T-cell (primary cell): ENCODE measurements at regions of chr20 and their contacts with region 1.

Region 1: GRCh38 chr20:63641792-63642544 is 11.3 kb downstream of the STMN3 start:
- DNase-seq: peak; percentile 91 to 99 (median 96)
- ATAC-seq: peak; percentile 54 to 72 (median 62)
- H3K4me3 ChIP-seq: peak overlapping the region in 1 of 2 donors; percentile 94
- H3K4me3 Mint-ChIP-seq: peak overlapping the region; percentile 74 to 80 (median 79)
- H3K27ac ChIP-seq: peak overlapping the region; percentile 82
- H3K27ac Mint-ChIP-seq: peak overlapping the region; percentile 55 to 68
- H3K4me1 ChIP-seq: peaks cover 21 to 43% of the 10 kb centered on the region in 2 experiments
- H3K4me1 Mint-ChIP-seq: peaks cover 29 to 42% (median 37%) of the 10 kb centered on the region in 3 donors
- H3K27me3 ChIP-seq: peaks cover 0 to 2% of the 10 kb centered on the region in 2 experiments
- H3K27me3 Mint-ChIP-seq: no peaks in the 10 kb centered on the region

Region 2: DNA sequence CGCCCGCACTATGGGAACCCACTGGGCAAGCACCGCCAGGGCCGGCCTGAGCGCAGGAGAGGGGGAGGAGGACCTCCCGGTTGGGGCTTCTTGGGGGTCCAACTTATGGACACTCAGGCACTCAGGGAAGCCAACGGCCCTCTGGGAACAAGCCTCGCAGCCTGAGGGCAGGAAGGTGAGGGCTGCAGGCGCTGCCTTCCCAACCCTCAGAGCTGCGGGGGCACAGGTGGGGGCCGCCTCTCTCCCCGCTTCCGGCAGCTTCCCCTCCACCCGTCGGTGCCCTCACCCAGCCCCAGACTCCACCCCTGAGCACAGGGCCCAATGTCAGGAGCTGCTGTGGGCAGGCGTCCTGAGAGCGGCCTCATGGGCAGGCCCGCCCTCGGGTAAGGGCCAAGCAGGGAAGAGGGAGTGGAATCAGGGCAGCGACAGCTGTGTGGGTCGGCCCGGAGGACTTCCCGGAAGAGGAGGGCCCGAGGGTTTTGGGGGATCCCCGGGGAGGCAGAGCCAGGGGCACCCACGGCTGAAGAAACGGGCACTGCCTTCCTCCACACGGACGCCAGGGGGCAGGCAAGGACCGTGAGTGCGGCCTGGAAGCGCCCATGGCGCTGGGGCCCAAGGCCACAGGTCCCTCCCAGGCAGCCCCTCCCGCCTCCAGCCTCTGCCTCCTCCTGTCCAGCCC is 104.3 kb before region 1 on chr20:
- CTCF ChIA-PET with region 1: interaction called in 1 of 2 experiments, 22 read pairs
- POLR2A ChIA-PET with region 1: no interaction called
- DNase-seq: peak; percentile 84 to 97 (median 90)
- ATAC-seq: peak; percentile 87 to 91 (median 89)
- H3K4me3 ChIP-seq: peak overlapping the region; percentile 48 to 59
- H3K4me3 Mint-ChIP-seq: peak overlapping the region; percentile 57 to 73 (median 70)
- H3K27ac ChIP-seq: peak overlapping the region; percentile 73
- H3K27ac Mint-ChIP-seq: peak overlapping the region; percentile 73 to 77
- H3K4me1 ChIP-seq: peaks cover 7 to 36% of the 10 kb centered on the region in 2 experiments
- H3K4me1 Mint-ChIP-seq: peaks cover 7 to 16% (median 8%) of the 10 kb centered on the region in 3 donors
- H3K27me3 ChIP-seq: peaks cover 0 to 4% of the 10 kb centered on the region in 2 experiments
- H3K27me3 Mint-ChIP-seq: no peaks in the 10 kb centered on the region

Region 3: DNA sequence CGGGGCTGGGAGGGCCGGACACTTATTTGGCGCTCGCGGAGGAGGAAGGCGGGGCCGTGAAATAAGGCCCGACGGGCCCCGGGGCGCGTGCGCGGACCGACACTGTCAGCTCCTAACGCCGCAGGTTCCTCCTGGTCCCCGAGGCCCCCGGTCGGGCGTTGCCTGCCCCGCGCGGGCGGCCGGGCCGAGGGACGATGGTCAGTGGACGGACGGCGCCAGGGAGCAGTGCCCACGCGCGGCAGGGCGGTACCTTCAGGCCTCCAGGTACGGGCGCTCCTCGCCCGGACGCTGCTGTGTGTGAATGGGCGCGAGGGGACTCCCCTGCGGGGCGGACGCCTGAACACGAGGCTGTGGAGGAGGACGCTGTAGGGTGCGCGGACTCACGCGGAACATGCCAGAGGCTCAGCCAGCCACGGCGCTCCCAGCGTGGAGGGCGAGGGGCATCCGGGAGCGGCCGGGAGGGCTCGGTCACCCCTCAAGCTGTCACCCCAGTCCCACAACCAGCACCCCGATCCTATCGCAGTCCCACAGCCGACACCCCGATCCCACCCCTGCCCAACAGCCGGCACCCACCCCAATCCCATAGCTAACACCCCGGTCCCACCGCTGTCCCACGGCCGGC is 14.7 kb before region 1 on chr20:
- CTCF ChIA-PET with region 1: interaction called in 1 of 2 experiments, 9 read pairs
- POLR2A ChIA-PET with region 1: interaction called, 14 to 21 read pairs
- DNase-seq: peak in 34 of 35 experiments; percentile 71 to 97 (median 92)
- ATAC-seq: peak; percentile 79 to 83 (median 80)
- H3K4me3 ChIP-seq: peak overlapping the region; percentile 84 to 98
- H3K4me3 Mint-ChIP-seq: peak overlapping the region; percentile 98 to 99 (median 99)
- H3K27ac ChIP-seq: peak overlapping the region; percentile 69
- H3K27ac Mint-ChIP-seq: peak overlapping the region; percentile 85 to 86
- H3K4me1 ChIP-seq: peaks cover 14 to 53% of the 10 kb centered on the region in 2 experiments
- H3K4me1 Mint-ChIP-seq: peaks cover 41 to 49% (median 48%) of the 10 kb centered on the region in 3 donors
- H3K27me3 ChIP-seq: no peaks in the 10 kb centered on the region
- H3K27me3 Mint-ChIP-seq: no peaks in the 10 kb centered on the region

Region 4: GRCh38 chr20:63657937-63658748 is 16.2 kb after region 1 on chr20 and contains the start of gene RTEL1:
- CTCF ChIA-PET with region 1: interaction called in 1 of 2 experiments, 16 read pairs
- POLR2A ChIA-PET with region 1: no interaction called
- DNase-seq: peak; percentile 67 to 96 (median 83)
- ATAC-seq: peak; percentile 84 to 88 (median 86)
- H3K4me3 ChIP-seq: peak within 1 kb of the TSS; percentile 88 to 93
- H3K4me3 Mint-ChIP-seq: peak within 1 kb of the TSS; percentile 88 to 95 (median 95)
- H3K27ac ChIP-seq: peak within 1 kb of the TSS; percentile 64
- H3K27ac Mint-ChIP-seq: peak within 1 kb of the TSS; percentile 94 to 98
- H3K4me1 ChIP-seq: peaks cover 13 to 44% of the 10 kb centered on the region in 2 experiments
- H3K4me1 Mint-ChIP-seq: peaks cover 39 to 42% (median 42%) of the 10 kb centered on the region in 3 donors
- H3K27me3 ChIP-seq: peaks cover 0 to 5% of the 10 kb centered on the region in 2 experiments
- H3K27me3 Mint-ChIP-seq: no peaks in the 10 kb centered on the region
- total RNA-seq, gene RTEL1: 30.7 to 41.6 (median 36.8) TPM